Esophagus squamous epithelium (tissue), 5 donors: ENCODE measurements at regions of chr4 and their contacts with region 1.

Region 1: DNA sequence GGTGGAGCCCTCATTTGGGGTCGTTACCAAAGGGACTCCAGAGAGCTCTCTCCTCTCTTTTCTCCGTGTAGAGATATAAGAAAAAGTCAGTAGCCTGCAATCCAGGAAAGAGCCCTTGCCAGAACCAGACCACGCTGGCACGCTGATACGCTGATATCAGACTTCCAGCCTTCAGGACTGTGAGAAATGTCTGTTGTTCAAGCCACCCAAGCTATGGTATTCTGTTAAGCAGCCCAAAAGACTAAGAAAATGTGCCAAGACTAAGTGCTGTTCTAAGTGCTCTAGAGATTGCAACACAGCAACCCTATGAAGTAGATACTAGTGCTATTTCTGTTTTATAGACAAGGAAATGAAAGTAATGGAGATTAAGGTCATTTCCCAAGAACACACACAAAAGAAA is 205.7 kb downstream of the CAMK2D start:
- DNase-seq: no peak
- H3K4me3 ChIP-seq: no peak overlapping the region
- H3K27ac ChIP-seq: peak overlapping the region; percentile 52 to 78 (median 67)
- H3K4me1 ChIP-seq: peaks cover 0 to 33% (median 12%) of the 10 kb centered on the region in 3 donors
- H3K27me3 ChIP-seq: no peaks in the 10 kb centered on the region
- CTCF ChIP-seq: no peak
- POLR2A ChIP-seq: no peak

Region 2: DNA sequence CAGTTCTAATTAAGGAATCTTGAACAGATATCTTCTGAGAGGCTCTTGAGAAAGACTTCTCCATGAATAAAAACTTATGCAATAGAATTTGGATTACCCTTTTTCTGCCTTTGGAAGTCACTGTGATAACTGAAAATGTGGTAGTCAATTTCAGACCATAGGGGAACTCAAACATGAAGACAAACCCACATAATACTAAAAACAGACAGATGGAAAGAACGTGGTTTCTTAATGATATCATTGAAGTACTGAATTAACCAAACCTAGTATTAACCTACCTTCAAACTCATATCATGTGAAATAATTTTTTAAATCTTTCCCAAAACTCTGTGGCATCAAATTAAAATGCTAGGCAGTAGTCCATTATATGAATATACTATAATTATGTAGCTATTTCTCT is 52.1 kb after region 1 on chr4:
- intact Hi-C with region 1: loop called (anchors 10 kb)
- DNase-seq: no peak
- H3K4me3 ChIP-seq: no peak overlapping the region
- H3K27ac ChIP-seq: no peak overlapping the region
- H3K4me1 ChIP-seq: no peaks in the 10 kb centered on the region
- H3K27me3 ChIP-seq: no peaks in the 10 kb centered on the region
- CTCF ChIP-seq: no peak
- POLR2A ChIP-seq: no peak